A549 (cell line): ENCODE measurements at regions of chr15 and their contacts with region 1.

Region 1: DNA sequence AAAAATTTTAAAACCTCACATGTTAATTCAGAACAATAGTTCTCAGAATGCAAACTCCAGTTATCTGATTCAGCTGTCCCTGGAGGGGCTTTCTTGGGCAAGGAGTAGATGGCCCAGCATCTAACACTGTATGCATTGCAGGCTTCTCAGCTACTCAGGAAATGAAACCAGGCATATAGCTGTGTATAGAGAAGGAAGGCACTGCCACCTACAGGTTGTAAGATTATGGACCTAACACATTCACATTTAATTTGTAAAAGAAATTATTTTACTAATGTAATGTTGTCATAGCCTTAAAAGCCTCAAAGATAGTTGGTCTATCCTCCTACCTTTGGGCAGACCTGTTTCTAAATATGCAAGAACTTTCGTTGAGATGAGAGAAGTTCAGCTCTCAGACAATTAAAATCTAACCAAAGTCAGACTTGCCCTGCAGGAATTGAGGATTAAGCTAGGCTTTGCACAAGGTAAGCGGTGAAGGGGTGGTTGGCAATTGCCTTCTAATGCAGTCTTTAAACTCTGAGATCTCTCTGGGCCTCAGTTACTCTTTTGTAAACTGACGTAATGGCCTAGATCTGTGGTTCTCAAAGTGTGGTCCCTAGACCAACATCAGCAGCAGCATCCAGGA is 132.8 kb upstream of the SLC24A5 start:
- DNase-seq: peak; percentile 4 to 53
- ATAC-seq: peak; percentile 88 to 89
- H3K4me3 ChIP-seq: no peak overlapping the region
- H3K27ac ChIP-seq: no peak overlapping the region
- H3K4me1 ChIP-seq: no peaks in the 10 kb centered on the region
- CTCF ChIP-seq: peak; percentile 52
- EP300 ChIP-seq: no peak
- POLR2A ChIP-seq: no peak
- RAD21 ChIP-seq: peak; percentile 64 to 74

Region 2: GRCh38 chr15:47196057-47196456 is 792.0 kb before region 1 on chr15:
- CTCF ChIA-PET with region 1: interaction called, 23 read pairs
- POLR2A ChIA-PET with region 1: no interaction called
- DNase-seq: peak; percentile 6 to 66
- ATAC-seq: peak; percentile 94 to 96
- H3K4me3 ChIP-seq: no peak overlapping the region
- H3K27ac ChIP-seq: no peak overlapping the region
- H3K4me1 ChIP-seq: no peaks in the 10 kb centered on the region
- CTCF ChIP-seq: peak; percentile 39; the same call in 2 of the 3 replicates
- EP300 ChIP-seq: no peak
- POLR2A ChIP-seq: no peak
- RAD21 ChIP-seq: peak; percentile 70 to 76

Region 3: DNA sequence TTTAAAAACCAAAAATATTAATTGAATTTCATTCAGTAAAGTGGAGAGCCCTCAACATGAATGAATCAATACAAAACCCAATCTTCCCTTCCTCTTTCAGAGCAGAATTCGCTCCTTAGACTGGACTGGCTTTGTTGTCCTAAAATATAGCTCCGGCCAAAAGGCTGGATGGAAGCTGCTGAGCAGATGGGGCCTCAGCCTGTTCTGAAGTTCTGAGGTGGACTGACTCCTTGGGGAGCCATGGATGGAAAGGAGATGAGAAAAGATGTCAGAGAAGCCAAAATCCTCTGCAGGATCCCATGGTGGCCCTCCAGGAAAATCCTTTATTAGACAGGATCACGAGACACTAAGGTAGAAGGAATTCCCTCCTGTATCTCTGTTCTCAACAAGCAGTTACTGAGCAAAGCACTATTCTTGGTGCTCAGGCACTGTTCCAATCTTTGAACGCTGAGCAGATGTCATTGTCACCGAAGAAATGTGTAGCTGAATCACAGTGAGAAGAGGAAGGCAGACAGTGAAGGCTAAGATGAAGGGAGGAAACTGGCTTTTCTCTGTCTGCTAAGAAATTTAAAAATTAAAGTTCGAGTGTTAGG is 148.7 kb before region 1 on chr15:
- CTCF ChIA-PET with region 1: no interaction called
- POLR2A ChIA-PET with region 1: no interaction called
- DNase-seq: no peak
- ATAC-seq: no peak
- H3K4me3 ChIP-seq: no peak overlapping the region
- H3K27ac ChIP-seq: no peak overlapping the region
- H3K4me1 ChIP-seq: no peaks in the 10 kb centered on the region
- CTCF ChIP-seq: no peak
- EP300 ChIP-seq: no peak
- POLR2A ChIP-seq: no peak
- RAD21 ChIP-seq: no peak

Region 4: DNA sequence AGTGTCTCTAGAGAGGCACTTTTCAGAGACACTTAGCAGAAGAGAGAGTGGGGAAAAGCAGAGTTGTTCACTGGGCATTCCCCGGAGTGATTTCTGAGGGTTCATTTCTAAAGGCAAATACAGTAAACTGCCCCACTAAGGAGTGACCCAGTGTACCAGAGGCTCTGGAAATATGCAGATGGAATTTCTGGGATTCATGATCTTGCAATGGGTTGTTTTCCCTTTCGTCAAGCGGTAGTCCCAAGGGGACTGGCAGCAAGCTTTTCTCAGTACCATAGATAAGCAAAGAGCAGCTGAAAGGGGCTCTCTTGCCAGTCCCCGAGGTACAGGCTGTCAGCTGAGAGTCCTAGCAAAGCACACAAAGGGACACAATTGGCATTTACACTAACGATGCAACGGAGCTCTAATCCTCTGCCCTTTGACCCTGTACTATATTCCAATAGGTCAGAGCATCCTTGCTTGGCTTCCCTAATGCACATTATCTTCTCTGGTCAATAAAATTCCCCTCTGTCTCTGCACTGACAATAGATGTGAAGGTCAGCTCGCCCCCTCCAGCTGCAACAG is 115.1 kb before region 1 on chr15:
- CTCF ChIA-PET with region 1: no interaction called
- POLR2A ChIA-PET with region 1: no interaction called
- DNase-seq: no peak
- ATAC-seq: no peak
- H3K4me3 ChIP-seq: no peak overlapping the region
- H3K27ac ChIP-seq: no peak overlapping the region
- H3K4me1 ChIP-seq: no peaks in the 10 kb centered on the region
- CTCF ChIP-seq: no peak
- EP300 ChIP-seq: no peak
- POLR2A ChIP-seq: no peak
- RAD21 ChIP-seq: no peak